K562 (cell line): ENCODE measurements at regions of chr21 and their contacts with region 1.

Region 1: GRCh38 chr21:33479679-33480480 is at the start of gene TMEM50B:
- DNase-seq: peak; percentile 98 to 100 (median 100)
- ATAC-seq: peak; percentile 95
- H3K4me3 ChIP-seq: peak within 1 kb of the TSS; percentile 97
- H3K27ac ChIP-seq: peak within 1 kb of the TSS; percentile 90
- H3K4me1 ChIP-seq: peaks cover 7 to 16% of the 10 kb centered on the region in 2 experiments; a peak in 3 of 5 replicates
- H3K27me3 ChIP-seq: no peaks in the 10 kb centered on the region
- CTCF ChIP-seq: peak; percentile 79 to 95 (median 94)
- EP300 ChIP-seq: no peak
- POLR2A ChIP-seq: peak; percentile 93
- RAD21 ChIP-seq: peak; percentile 65 to 66
- polyA plus RNA-seq, gene TMEM50B: 41.3 to 49.1 TPM

Region 2: DNA sequence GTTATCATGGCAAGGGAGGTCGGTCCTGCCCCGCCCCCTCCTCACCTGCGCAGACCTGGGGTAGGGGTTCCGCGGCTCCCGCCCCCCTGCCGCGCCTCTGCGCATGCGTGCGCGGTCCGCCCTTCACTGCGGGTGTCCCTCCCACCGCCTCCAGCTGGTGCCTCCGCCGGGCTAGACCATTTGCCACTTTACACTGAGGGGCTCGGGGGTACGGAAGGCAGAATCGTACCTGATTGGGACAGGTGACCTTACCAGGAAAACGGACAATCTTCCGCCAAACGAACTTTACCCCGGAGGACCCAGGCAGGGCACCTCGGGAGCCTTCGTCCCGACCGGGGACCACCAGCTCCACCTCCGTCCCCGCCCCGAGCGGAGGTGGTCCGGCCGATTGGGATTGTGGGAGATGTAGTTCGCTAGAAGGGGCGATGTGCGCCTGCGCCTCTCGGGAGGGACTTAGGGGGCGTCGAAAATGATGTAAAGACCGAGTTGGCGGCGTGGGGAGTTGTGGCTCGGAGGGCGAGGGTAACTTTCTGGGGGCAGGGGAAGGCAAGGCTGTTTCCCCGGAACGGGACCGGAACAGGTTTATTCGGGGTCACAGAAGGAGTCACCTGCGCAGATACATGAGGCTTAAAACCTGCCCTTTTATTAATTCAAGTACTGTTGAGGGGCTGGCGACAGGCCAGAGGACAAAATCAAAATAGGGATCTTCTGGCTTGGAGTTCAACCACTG is 11.7 kb after region 1 on chr21 and contains the start of gene DNAJC28:
- CTCF ChIA-PET with region 1: interaction called, 4 read pairs
- POLR2A ChIA-PET with region 1: interaction called, 54 read pairs
- in situ Hi-C with region 1: no loop called
- intact Hi-C with region 1: no loop called
- DNase-seq: peak; percentile 98 to 99 (median 98)
- ATAC-seq: peak; percentile 97
- H3K4me3 ChIP-seq: peak within 1 kb of the TSS; percentile 73
- H3K27ac ChIP-seq: peak within 1 kb of the TSS; percentile 66
- H3K4me1 ChIP-seq: peaks cover 0 to 10% of the 10 kb centered on the region in 2 experiments; a peak in 3 of 5 replicates
- H3K27me3 ChIP-seq: no peaks in the 10 kb centered on the region
- CTCF ChIP-seq: no peak
- EP300 ChIP-seq: 0 out of 2 replicates have a peak, but pooled peaks have one; percentile 7
- POLR2A ChIP-seq: peak; percentile 85
- RAD21 ChIP-seq: no peak
- polyA plus RNA-seq, gene DNAJC28: 0.75 to 0.92 TPM